Activated naive CD4-positive, alpha-beta T cell treated with anti-CD3 and anti-CD28 coated beads, Interleukin-2, amount 10 ng/mL, durations not matched to agents 7 days and 5 days (primary cell): ENCODE measurements at regions of chr15 and their contacts with region 1.

Region 1: DNA sequence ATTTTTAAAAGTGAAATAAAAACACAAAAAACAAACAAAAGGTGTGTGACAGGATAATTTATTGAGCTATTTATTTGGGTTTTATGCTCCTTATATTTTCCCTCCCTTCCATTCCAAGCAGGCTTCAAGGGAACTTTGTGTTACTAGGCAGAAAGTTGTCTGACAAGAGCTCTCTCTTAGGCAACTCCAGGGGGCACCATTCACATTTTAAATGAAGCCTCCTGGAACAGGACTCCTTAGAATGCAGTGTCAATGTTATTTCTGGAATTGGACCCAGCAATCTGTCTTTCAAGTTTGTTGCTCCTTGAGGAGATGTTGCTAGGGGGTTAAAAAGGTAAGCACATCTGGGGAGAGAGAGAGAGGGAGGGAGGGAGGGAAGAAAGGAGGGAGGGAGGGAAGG is 5.4 kb upstream of the RFX7 start:
- DNase-seq: no peak
- H3K4me3 Mint-ChIP-seq: no peak overlapping the region
- H3K27ac Mint-ChIP-seq: no peak overlapping the region
- H3K4me1 Mint-ChIP-seq: peaks cover 23% of the 10 kb centered on the region
- H3K27me3 Mint-ChIP-seq: peaks cover 12% of the 10 kb centered on the region

Region 2: GRCh38 chr15:56327701-56328452 is 78.8 kb after region 1 on chr15:
- CTCF ChIA-PET with region 1: no interaction called
- DNase-seq: no peak
- H3K4me3 Mint-ChIP-seq: no peak overlapping the region
- H3K27ac Mint-ChIP-seq: no peak overlapping the region
- H3K4me1 Mint-ChIP-seq: no peaks in the 10 kb centered on the region
- H3K27me3 Mint-ChIP-seq: peaks cover 11% of the 10 kb centered on the region

Region 3: DNA sequence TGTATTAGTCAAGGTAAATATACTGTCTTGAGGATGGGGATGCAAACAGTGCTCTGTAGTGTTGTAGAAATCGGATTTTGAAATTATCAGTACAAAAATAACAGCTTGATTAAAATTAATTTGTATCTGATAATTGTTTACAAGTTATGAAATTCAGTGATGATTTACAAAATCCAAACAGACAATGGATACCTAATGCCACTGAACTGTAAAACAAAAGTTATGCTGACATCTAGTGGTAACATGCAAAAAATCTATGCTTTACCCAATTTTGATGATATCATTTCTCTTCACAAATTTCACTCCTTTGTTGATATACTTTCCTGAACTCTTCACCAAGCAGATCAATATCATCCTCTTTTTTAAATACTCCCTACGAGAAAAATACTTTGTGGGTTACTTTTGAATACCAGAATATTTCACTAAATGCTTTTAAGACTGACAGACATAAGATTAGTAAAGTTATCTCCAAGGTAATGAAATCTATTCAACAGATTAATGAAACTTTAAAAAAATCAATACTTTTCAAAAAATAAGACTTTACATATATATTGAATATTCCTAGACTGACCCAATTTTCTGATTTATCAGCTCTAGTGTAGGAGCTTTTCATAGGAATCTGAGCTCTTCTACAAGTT is 179.8 kb after region 1 on chr15:
- CTCF ChIA-PET with region 1: interaction called, 24 read pairs
- DNase-seq: no peak
- H3K4me3 Mint-ChIP-seq: no peak overlapping the region
- H3K27ac Mint-ChIP-seq: no peak overlapping the region
- H3K4me1 Mint-ChIP-seq: no peaks in the 10 kb centered on the region
- H3K27me3 Mint-ChIP-seq: no peaks in the 10 kb centered on the region